ENCODE measurements at regions of chr17 and their contacts with region 1.

Region 1: GRCh38 chr17:4354862-4355514 is 11.5 kb downstream of the UBE2G1 start:
- DNase-seq: no peak

Region 2: GRCh38 chr17:4318186-4318585 is 36.8 kb before region 1 on chr17:
- intact Hi-C with region 1: loop called (anchors 5 kb)
- DNase-seq: no peak